ENCODE measurements at regions of chrX and their contacts with region 1.

Region 1: DNA sequence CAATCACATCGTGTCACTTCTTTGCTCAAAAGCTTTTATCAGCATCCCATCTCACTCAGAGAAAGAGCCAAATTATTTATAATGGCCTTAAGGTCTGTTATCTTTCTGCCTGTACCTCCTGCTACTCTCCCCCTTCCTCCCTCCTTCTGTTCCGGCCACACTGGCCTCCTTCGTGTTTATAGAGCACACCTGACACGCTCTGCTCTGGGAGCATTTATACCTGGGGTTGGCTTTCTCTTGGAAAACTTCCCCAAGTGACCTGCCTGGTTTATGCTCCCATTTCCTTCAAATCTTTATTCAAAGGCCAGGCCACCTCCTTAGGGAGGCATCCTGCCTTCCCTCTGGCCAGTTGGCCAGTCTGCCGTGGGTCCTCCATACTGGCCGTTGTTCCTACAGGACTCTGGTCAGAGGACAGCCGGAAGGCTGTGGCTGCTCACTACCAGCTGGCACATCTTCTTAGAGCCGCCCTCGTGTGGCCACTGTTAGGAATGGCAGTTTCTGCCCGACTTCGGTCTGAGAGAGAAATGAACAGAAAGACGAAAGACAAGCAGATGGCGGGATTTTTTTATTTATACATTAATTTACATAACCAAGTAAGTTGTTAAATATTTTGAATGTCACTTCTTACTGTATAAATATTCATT is 80.2 kb upstream of the CBLL2 start:
- DNase-seq: peak; percentile 20
- ATAC-seq: peak; percentile 83
- H3K4me3 Mint-ChIP-seq: no peak overlapping the region
- H3K27ac Mint-ChIP-seq: no peak overlapping the region
- H3K4me1 Mint-ChIP-seq: peaks cover 16% of the 10 kb centered on the region
- H3K27me3 Mint-ChIP-seq: no peaks in the 10 kb centered on the region
- CTCF ChIP-seq: no peak

Region 2: GRCh38 chrX:20530406-20530921 is 1662.1 kb before region 1 on chrX:
- CTCF ChIA-PET with region 1: no interaction called
- POLR2A ChIA-PET with region 1: no interaction called
- intact Hi-C with region 1: loop called (anchors 10 kb)
- DNase-seq: no peak
- ATAC-seq: no peak
- H3K4me3 Mint-ChIP-seq: no peak overlapping the region
- H3K27ac Mint-ChIP-seq: no peak overlapping the region
- H3K4me1 Mint-ChIP-seq: peaks cover 1% of the 10 kb centered on the region
- H3K27me3 Mint-ChIP-seq: peaks cover 21% of the 10 kb centered on the region
- CTCF ChIP-seq: peak; percentile 32

Region 3: DNA sequence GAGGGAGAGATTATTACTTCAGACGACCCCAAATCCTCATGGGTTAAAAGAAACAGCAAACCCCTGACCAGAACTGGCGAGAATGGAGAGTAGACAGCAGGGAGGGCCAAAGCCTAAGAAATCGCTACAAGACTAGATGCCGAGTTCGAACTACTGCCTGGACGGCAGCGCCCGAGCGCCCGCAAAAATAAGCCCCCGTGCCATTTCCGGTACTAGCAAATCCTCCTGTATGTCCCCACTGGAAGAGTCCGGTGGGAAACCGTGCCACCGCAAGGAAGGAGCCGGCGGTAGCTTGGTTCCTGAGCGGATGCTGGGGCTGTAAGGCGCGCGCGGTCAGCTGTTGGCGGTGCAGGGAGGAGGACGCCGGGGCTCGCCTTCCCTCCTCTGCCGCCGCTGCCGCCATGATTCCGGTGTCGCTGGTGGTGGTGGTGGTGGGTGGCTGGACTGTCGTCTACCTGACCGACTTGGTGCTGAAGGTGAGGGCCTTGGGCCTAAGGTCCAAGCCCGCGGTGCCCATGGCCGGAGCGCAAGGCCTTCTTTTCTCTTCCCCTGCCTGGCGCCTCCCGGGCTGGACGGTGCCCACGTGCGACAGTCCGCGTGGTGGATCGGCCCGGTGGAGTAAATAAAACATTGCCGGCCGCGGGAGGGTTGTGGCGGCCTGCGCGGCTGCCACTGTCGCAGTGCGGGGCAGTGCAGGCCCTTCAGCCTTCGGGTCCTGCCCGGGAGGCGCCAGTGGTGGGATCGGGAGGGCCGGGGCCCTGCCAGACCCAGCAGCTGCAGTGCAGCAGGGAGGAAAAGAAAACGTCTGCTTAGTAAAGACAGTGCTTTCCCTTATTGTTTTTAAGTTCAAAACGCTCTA is 353.0 kb before region 1 on chrX and contains the start of gene MBTPS2:
- CTCF ChIA-PET with region 1: no interaction called
- POLR2A ChIA-PET with region 1: no interaction called
- intact Hi-C with region 1: loop called (anchors 1 kb)
- DNase-seq: peak; percentile 75
- ATAC-seq: peak; percentile 92
- H3K4me3 Mint-ChIP-seq: peak within 1 kb of the TSS; percentile 90
- H3K27ac Mint-ChIP-seq: peak within 1 kb of the TSS; percentile 86
- H3K4me1 Mint-ChIP-seq: peaks cover 7% of the 10 kb centered on the region
- H3K27me3 Mint-ChIP-seq: no peaks in the 10 kb centered on the region
- CTCF ChIP-seq: no peak
- total RNA-seq, gene MBTPS2: 7.9 and 9.0 TPM in 2 replicates

Region 4: DNA sequence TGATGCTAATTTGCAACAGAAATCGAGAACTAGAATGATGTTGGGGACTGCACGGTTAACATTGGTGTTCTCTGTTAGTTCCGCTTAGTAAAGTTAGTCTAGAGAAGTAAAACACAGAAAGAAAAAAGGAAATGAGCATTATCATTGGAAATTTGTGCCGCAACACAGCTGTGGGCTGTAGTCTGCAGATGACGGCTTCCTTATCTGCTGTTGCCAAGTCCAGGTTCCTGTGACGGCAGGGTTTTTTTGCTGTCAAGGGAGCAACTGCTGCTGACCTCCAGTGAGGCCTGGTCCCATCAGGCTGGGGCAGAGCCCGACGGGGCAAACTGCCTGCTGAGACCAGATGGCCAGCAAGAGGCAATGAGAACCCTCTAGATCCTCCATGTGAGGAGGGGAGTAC is 199.3 kb before region 1 on chrX:
- CTCF ChIA-PET with region 1: no interaction called
- POLR2A ChIA-PET with region 1: no interaction called
- intact Hi-C with region 1: loop called (anchors 2 kb)
- DNase-seq: peak; percentile 29
- ATAC-seq: peak; percentile 85
- H3K4me3 Mint-ChIP-seq: peak overlapping the region; percentile 50
- H3K27ac Mint-ChIP-seq: peak overlapping the region; percentile 86
- H3K4me1 Mint-ChIP-seq: peaks cover 55% of the 10 kb centered on the region
- H3K27me3 Mint-ChIP-seq: no peaks in the 10 kb centered on the region
- CTCF ChIP-seq: no peak

Region 5: DNA sequence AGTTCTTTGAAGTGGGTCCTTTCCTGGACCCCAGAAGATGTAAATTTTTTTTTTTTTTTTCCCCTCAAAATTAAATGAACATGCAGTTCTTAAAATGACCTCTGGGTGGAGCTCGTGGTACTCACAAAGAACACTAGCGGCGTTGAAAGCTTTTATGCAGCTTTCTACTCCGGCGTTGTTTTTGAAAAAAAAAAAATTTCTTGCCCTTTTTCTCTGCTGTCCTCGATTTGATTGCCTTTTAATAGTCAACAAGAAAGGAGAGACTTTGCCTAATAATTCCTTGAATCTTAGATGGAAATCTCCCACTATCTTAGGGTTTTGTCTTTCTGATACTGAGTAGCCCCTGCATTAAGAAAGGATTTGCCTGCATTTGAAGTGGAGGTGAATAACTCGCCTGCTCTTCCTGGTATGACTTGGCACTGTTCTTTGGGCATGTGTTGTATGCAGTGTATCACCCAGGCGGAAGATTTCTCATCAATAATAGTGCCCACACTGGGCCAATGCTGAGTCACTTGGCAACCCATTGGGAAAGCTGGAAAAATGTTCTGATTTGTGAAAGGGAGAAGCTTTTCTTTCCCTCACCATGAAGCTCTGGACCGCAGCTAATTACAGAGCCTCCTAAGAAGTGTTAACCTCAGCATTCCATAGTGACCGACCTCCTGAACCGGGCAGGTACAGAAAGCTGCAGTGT is 56.4 kb before region 1 on chrX:
- CTCF ChIA-PET with region 1: interaction called, 5 read pairs
- POLR2A ChIA-PET with region 1: no interaction called
- intact Hi-C with region 1: loop called (anchors 2 kb)
- DNase-seq: no peak
- ATAC-seq: no peak
- H3K4me3 Mint-ChIP-seq: no peak overlapping the region
- H3K27ac Mint-ChIP-seq: no peak overlapping the region
- H3K4me1 Mint-ChIP-seq: peaks cover 4% of the 10 kb centered on the region
- H3K27me3 Mint-ChIP-seq: no peaks in the 10 kb centered on the region
- CTCF ChIP-seq: no peak

Region 6: DNA sequence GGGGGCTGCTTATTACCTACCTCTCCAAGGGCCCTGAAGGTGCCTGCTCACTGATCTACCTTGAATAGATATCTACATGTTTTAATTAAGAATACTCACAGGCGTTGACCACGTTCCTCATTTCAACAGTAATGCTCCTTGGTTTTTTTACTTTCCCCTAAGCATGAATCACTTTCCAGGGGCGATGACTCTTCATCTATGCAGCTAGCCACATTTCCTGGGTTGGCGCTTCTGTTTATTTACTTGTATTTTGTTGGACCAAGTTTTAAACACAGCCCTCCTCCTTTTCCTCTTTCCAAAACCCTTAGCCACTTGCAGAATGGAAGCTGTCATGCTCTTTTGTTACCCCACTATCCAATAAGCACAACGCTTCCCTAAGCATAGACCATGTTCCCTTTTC is 131.0 kb after region 1 on chrX:
- CTCF ChIA-PET with region 1: no interaction called
- POLR2A ChIA-PET with region 1: no interaction called
- intact Hi-C with region 1: no loop called
- DNase-seq: no peak
- ATAC-seq: no peak
- H3K4me3 Mint-ChIP-seq: no peak overlapping the region
- H3K27ac Mint-ChIP-seq: no peak overlapping the region
- H3K4me1 Mint-ChIP-seq: no peaks in the 10 kb centered on the region
- H3K27me3 Mint-ChIP-seq: peaks cover 5% of the 10 kb centered on the region
- CTCF ChIP-seq: no peak

Region 7: GRCh38 chrX:22748093-22748999 is 555.8 kb after region 1 on chrX:
- CTCF ChIA-PET with region 1: no interaction called
- POLR2A ChIA-PET with region 1: no interaction called
- intact Hi-C with region 1: loop called (anchors 5 kb)
- DNase-seq: peak; percentile 14
- ATAC-seq: peak; percentile 64
- H3K4me3 Mint-ChIP-seq: no peak overlapping the region
- H3K27ac Mint-ChIP-seq: no peak overlapping the region
- H3K4me1 Mint-ChIP-seq: no peaks in the 10 kb centered on the region
- H3K27me3 Mint-ChIP-seq: no peaks in the 10 kb centered on the region
- CTCF ChIP-seq: no peak

Region 8: GRCh38 chrX:22795716-22796115 is 603.2 kb after region 1 on chrX:
- CTCF ChIA-PET with region 1: no interaction called
- POLR2A ChIA-PET with region 1: no interaction called
- intact Hi-C with region 1: no loop called
- DNase-seq: no peak
- ATAC-seq: no peak
- H3K4me3 Mint-ChIP-seq: no peak overlapping the region
- H3K27ac Mint-ChIP-seq: no peak overlapping the region
- H3K4me1 Mint-ChIP-seq: peaks cover 5% of the 10 kb centered on the region
- H3K27me3 Mint-ChIP-seq: no peaks in the 10 kb centered on the region
- CTCF ChIP-seq: no peak